GM13976 (cell line): ENCODE measurements at regions of chr1 and their contacts with region 1.

Region 1: GRCh38 chr1:147890177-147890790 is 12.3 kb upstream of the GJA8 start:
- DNase-seq: peak; percentile 55
- CTCF ChIP-seq: peak; percentile 86

Region 2: GRCh38 chr1:147515046-147515869 is 375.0 kb before region 1 on chr1:
- in situ Hi-C with region 1: loop called (anchors 25 kb)
- DNase-seq: no peak
- CTCF ChIP-seq: no peak